GM12878 (cell line): ENCODE measurements at regions of chr1 and their contacts with region 1.

Region 1: GRCh38 chr1:61043010-61043820 is 39.1 kb upstream of the NFIA start:
- DNase-seq: no peak
- ATAC-seq: peak; percentile 93
- H3K4me3 ChIP-seq: no peak overlapping the region
- H3K27ac ChIP-seq: no peak overlapping the region
- H3K4me1 ChIP-seq: no peaks in the 10 kb centered on the region
- H3K27me3 ChIP-seq: peaks cover 0 to 2% of the 10 kb centered on the region in 2 experiments; a peak in 1 of 4 replicates
- CTCF ChIP-seq: peak; percentile 56 to 64 (median 62)
- EP300 ChIP-seq: no peak
- POLR2A ChIP-seq: no peak
- RAD21 ChIP-seq: peak; percentile 34

Region 2: GRCh38 chr1:59971464-59971911 is 1071.7 kb before region 1 on chr1:
- CTCF ChIA-PET with region 1: no interaction called
- POLR2A ChIA-PET with region 1: no interaction called
- RAD21 ChIA-PET with region 1: interaction called, 5 read pairs
- SMC1A ChIA-PET with region 1: no interaction called
- in situ Hi-C with region 1: no loop called
- intact Hi-C with region 1: loop called (anchors 5 kb)
- DNase-seq: no peak
- ATAC-seq: peak; percentile 86
- H3K4me3 ChIP-seq: no peak overlapping the region
- H3K27ac ChIP-seq: no peak overlapping the region
- H3K4me1 ChIP-seq: no peaks in the 10 kb centered on the region
- H3K27me3 ChIP-seq: no peaks in the 10 kb centered on the region
- CTCF ChIP-seq: peak; percentile 87 to 90 (median 90)
- EP300 ChIP-seq: no peak
- POLR2A ChIP-seq: no peak
- RAD21 ChIP-seq: peak; percentile 68

Region 3: GRCh38 chr1:60281360-60281932 is 761.8 kb before region 1 on chr1:
- CTCF ChIA-PET with region 1: interaction called, 11 read pairs
- POLR2A ChIA-PET with region 1: no interaction called
- RAD21 ChIA-PET with region 1: interaction called, 4 read pairs
- SMC1A ChIA-PET with region 1: no interaction called
- in situ Hi-C with region 1: no loop called
- intact Hi-C with region 1: loop called (anchors 10 kb)
- DNase-seq: peak; percentile 1
- ATAC-seq: peak; percentile 91
- H3K4me3 ChIP-seq: no peak overlapping the region
- H3K27ac ChIP-seq: no peak overlapping the region
- H3K4me1 ChIP-seq: no peaks in the 10 kb centered on the region
- H3K27me3 ChIP-seq: no peaks in the 10 kb centered on the region
- CTCF ChIP-seq: peak; percentile 70 to 86 (median 71)
- EP300 ChIP-seq: no peak
- POLR2A ChIP-seq: no peak
- RAD21 ChIP-seq: peak; percentile 97

Region 4: DNA sequence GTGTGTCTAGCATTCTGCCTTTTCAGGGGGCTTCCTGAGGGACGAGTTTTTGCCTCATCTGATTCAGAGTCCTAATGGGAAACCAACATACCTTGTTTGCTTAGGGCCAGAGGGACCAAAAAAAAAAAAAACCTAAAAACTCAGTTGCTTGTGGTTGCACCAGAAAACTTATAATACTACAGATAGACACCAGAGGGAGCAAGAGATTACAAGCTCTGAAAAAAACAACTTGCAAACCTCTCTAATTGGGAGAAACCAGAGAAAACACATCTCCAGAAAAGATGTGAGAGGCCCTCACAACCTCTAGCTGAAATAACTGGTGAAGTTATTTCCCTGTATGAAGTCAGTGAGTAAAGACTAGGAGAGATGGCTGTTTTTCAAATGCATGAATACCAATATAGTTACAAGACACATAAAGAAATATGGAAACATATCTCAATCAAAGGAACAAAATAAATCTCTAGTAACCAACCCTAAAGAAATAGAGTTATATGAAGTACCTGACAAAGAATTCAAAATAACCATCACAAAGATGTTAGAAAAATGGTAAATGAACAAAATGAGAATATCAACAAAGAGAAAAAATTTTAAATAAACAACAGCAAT is 194.5 kb before region 1 on chr1:
- CTCF ChIA-PET with region 1: interaction called, 11 read pairs
- POLR2A ChIA-PET with region 1: no interaction called
- RAD21 ChIA-PET with region 1: no interaction called
- SMC1A ChIA-PET with region 1: interaction called, 3 read pairs
- in situ Hi-C with region 1: no loop called
- intact Hi-C with region 1: loop called (anchors 2 kb)
- DNase-seq: no peak
- ATAC-seq: peak; percentile 15; the same call in 1 of the 3 replicates
- H3K4me3 ChIP-seq: no peak overlapping the region
- H3K27ac ChIP-seq: no peak overlapping the region
- H3K4me1 ChIP-seq: no peaks in the 10 kb centered on the region
- H3K27me3 ChIP-seq: no peaks in the 10 kb centered on the region
- CTCF ChIP-seq: peak; percentile 23 to 42 (median 37); a peak in 5 of 6 replicates
- EP300 ChIP-seq: no peak
- POLR2A ChIP-seq: no peak
- RAD21 ChIP-seq: peak; percentile 53

Region 5: DNA sequence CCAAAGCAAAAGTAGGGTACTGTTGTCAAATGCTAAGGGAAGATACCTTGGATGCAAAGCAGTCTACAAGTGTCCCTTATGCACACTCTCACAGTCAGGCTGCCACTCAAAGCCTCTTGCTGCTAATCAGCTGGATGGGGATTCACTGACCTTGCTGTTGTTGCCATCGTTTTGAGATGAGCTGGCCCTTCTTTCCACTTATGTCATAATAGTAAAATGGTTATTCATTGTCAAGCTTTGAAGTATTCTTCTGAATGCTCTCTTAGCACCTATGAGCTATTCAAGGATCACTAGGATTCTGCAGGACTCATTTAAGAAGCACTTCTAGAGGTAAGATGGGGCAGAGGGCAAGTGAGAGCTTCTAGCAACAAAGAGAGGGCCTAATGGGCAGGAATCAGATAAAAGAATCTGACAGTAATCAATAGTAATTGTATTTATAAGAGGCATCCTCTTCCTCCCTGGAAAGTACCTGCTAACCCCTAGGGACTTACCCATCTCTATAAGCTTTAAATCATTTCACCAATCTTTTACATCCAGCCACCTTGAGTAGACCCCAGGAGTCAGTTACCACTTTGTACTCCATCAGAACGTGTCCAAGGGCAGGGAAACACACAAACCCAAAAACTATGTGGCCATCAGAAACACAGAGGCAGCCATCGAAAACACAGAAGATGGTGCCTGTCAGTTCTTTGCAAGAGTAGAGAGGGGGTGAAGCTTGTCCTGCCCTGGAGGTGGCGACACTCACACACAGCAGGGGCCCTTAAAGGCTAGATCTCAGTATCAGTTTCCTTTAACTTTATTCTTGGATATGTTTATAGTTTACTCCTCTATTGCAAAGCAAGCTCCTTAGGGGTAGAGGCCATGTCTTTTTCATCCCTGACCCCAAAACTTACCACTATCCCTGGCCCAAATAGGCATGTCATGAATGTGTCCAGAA is 64.5 kb before region 1 on chr1:
- CTCF ChIA-PET with region 1: interaction called, 13 read pairs
- POLR2A ChIA-PET with region 1: no interaction called
- RAD21 ChIA-PET with region 1: interaction called, 8 read pairs
- SMC1A ChIA-PET with region 1: no interaction called
- in situ Hi-C with region 1: no loop called
- intact Hi-C with region 1: loop called (anchors 2 kb)
- DNase-seq: peak; percentile 15
- ATAC-seq: peak; percentile 93
- H3K4me3 ChIP-seq: no peak overlapping the region
- H3K27ac ChIP-seq: no peak overlapping the region
- H3K4me1 ChIP-seq: no peaks in the 10 kb centered on the region
- H3K27me3 ChIP-seq: no peaks in the 10 kb centered on the region
- CTCF ChIP-seq: peak; percentile 58 to 60 (median 60)
- EP300 ChIP-seq: no peak
- POLR2A ChIP-seq: no peak
- RAD21 ChIP-seq: peak; percentile 62